K562 (cell line): ENCODE measurements at regions of chr4 and their contacts with region 1.

Region 1: GRCh38 chr4:98995183-98996055 is at the start of gene METAP1:
- DNase-seq: peak; percentile 91 to 98 (median 93)
- ATAC-seq: peak; percentile 90
- H3K4me3 ChIP-seq: peak within 1 kb of the TSS; percentile 99
- H3K27ac ChIP-seq: peak within 1 kb of the TSS; percentile 97
- H3K4me1 ChIP-seq: peaks cover 4 to 8% of the 10 kb centered on the region in 2 experiments; a peak in 4 of 5 replicates
- H3K27me3 ChIP-seq: no peaks in the 10 kb centered on the region
- CTCF ChIP-seq: peak; percentile 85 to 99 (median 98)
- EP300 ChIP-seq: peak; percentile 51; the same call in 1 of the 2 replicates
- POLR2A ChIP-seq: peak; percentile 95
- RAD21 ChIP-seq: peak; percentile 91 to 96
- polyA plus RNA-seq, gene METAP1: 31.4 to 48.0 TPM

Region 2: GRCh38 chr4:98745366-98745765 is 250.1 kb before region 1 on chr4:
- CTCF ChIA-PET with region 1: interaction called, 4 read pairs
- POLR2A ChIA-PET with region 1: no interaction called
- in situ Hi-C with region 1: no loop called
- intact Hi-C with region 1: loop called (anchors 1 kb)
- DNase-seq: peak in 2 of 4 experiments; percentile 29 to 78
- ATAC-seq: peak; percentile 87
- H3K4me3 ChIP-seq: no peak overlapping the region
- H3K27ac ChIP-seq: no peak overlapping the region
- H3K4me1 ChIP-seq: no peaks in the 10 kb centered on the region; a peak in 1 of 5 replicates
- H3K27me3 ChIP-seq: no peaks in the 10 kb centered on the region
- CTCF ChIP-seq: peak; percentile 69 to 84 (median 72)
- EP300 ChIP-seq: no peak
- POLR2A ChIP-seq: no peak
- RAD21 ChIP-seq: peak; percentile 64 to 80

Region 3: GRCh38 chr4:98928505-98929340 is 66.7 kb before region 1 on chr4 and contains the start of gene EIF4E:
- CTCF ChIA-PET with region 1: interaction called, 3 read pairs
- POLR2A ChIA-PET with region 1: interaction called, 4 read pairs
- in situ Hi-C with region 1: no loop called
- intact Hi-C with region 1: loop called (anchors 10 kb)
- DNase-seq: peak; percentile 94 to 99 (median 96)
- ATAC-seq: peak; percentile 84
- H3K4me3 ChIP-seq: peak within 1 kb of the TSS; percentile 97
- H3K27ac ChIP-seq: peak within 1 kb of the TSS; percentile 96
- H3K4me1 ChIP-seq: peaks cover 11 to 15% of the 10 kb centered on the region in 2 experiments
- H3K27me3 ChIP-seq: no peaks in the 10 kb centered on the region
- CTCF ChIP-seq: peak; percentile 17 to 38 (median 28); a peak in 5 of 6 replicates
- EP300 ChIP-seq: 0 out of 2 replicates have a peak, but pooled peaks have one; percentile 21
- POLR2A ChIP-seq: peak; percentile 92
- RAD21 ChIP-seq: no peak
- polyA plus RNA-seq, gene EIF4E: 349 to 489 TPM

Region 4: DNA sequence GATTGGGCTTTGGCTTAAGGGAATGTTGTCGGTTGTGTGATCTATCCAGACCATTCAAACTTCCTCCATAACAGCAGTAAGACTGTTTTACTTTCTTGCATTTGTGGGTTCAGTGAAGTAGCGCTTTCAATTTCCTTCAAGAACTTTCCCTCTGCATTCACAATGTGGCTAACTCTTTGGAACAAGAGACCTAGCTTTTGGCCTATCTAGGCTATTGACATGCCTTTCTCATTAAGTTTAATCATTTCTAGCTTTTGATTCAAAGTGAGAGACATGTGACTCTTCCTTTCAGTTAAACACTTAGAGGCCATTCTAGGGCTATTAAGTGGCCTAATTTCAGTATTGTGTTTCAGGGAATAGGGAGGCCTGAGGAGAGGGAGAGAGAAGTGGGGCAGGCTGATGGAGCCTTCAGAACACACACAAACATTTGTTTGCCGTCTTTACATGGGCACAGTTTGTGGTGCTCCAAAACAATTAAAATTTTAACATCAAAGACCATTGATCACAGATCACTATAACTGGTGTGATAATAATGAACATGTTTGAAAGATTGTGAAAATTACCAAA is 59.1 kb after region 1 on chr4:
- CTCF ChIA-PET with region 1: interaction called, 11 read pairs
- POLR2A ChIA-PET with region 1: no interaction called
- in situ Hi-C with region 1: loop called (anchors 5 kb)
- intact Hi-C with region 1: loop called (anchors 1 kb)
- DNase-seq: no peak
- ATAC-seq: no peak
- H3K4me3 ChIP-seq: no peak overlapping the region
- H3K27ac ChIP-seq: no peak overlapping the region
- H3K4me1 ChIP-seq: no peaks in the 10 kb centered on the region; a peak in 2 of 5 replicates
- H3K27me3 ChIP-seq: no peaks in the 10 kb centered on the region
- CTCF ChIP-seq: no peak
- EP300 ChIP-seq: no peak
- POLR2A ChIP-seq: no peak
- RAD21 ChIP-seq: no peak

Region 5: DNA sequence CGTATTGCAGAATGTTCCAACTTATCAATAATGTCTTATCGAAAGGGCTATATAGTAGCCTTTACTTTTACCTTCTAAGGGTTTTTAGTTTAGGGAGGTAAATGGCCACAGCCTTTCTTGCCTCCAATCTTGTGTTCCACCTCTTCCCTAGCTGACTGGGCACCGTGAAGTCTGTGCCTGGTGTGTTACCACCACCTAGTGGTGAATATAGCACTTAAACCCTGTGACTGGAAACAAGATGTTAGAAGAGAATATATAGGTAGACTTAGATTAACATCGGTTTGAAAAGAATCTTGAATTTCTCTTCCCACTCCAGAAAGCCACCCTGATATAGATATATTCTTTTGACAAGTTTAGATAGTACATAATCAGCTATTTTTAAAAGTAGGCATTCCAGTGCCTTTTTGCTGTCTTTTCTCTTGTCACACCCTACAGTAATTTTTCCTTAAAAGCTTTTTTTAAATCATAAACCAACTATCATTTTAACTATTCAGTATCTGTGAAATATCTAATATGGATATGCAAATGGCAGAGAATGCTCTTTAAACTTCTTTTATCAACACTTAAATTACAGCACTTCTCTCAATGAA is 467.6 kb after region 1 on chr4:
- CTCF ChIA-PET with region 1: no interaction called
- POLR2A ChIA-PET with region 1: no interaction called
- in situ Hi-C with region 1: no loop called
- intact Hi-C with region 1: loop called (anchors 5 kb)
- DNase-seq: peak; percentile 66 to 72 (median 68)
- ATAC-seq: peak; percentile 97
- H3K4me3 ChIP-seq: no peak overlapping the region
- H3K27ac ChIP-seq: no peak overlapping the region
- H3K4me1 ChIP-seq: no peaks in the 10 kb centered on the region
- H3K27me3 ChIP-seq: no peaks in the 10 kb centered on the region
- CTCF ChIP-seq: peak; percentile 74 to 84 (median 79)
- EP300 ChIP-seq: no peak
- POLR2A ChIP-seq: no peak
- RAD21 ChIP-seq: peak; percentile 83 to 84